ENCODE measurements at regions of chr4 and their contacts with region 1.

Region 1: GRCh38 chr4:15001869-15002658 is at the start of gene CPEB2:
- DNase-seq: peak; percentile 79 to 97
- H3K4me3 ChIP-seq: peak within 1 kb of the TSS; percentile 99
- H3K27ac ChIP-seq: peak within 1 kb of the TSS; percentile 99 to 100
- H3K4me1 ChIP-seq: no peaks in the 10 kb centered on the region
- H3K27me3 ChIP-seq: no peaks in the 10 kb centered on the region
- CTCF ChIP-seq: peak in 1 of 3 experiments; percentile 4
- total RNA-seq, gene CPEB2: 30.4 TPM

Region 2: DNA sequence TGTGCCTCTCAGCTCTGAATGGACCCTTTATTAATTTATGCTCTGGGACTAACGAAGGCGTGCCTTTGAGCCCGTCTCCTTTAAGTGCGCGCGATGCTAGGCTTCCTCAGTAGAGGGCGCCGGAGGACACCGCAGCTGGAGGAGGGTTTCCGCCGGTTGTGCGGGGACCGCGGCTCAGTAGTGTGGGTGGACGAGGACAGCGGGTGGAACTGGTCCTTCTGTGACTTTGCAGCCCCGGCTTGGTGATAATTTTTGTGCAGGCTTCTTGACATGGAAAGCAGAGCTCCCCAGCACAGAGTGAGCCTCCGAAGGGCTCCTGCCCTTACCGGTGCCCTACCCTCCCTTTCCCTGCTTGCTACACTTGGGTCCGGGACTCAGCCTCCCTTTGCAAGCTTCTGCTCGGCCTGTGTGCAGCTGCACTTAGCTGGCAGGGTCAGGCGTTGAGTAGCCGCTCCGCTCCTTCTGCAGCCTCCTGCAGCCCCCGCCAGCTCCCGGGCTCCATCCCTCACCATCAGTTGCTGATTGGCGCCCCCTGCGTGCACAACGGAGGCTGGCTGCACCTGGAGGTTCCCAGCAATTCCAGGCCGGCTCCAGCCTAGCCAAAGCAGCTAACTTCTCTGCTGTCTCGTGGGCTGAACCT is 1347.8 kb before region 1 on chr4:
- intact Hi-C with region 1: loop called (anchors 10 kb)
- DNase-seq: peak in 1 of 2 donors; percentile 89
- H3K4me3 ChIP-seq: peak overlapping the region; percentile 61 to 66
- H3K27ac ChIP-seq: peak overlapping the region in 1 of 2 donors; percentile 22
- H3K4me1 ChIP-seq: peaks cover 0 to 4% of the 10 kb centered on the region in 2 donors
- H3K27me3 ChIP-seq: no peaks in the 10 kb centered on the region
- CTCF ChIP-seq: peak; percentile 58 to 82 (median 74)

Region 3: DNA sequence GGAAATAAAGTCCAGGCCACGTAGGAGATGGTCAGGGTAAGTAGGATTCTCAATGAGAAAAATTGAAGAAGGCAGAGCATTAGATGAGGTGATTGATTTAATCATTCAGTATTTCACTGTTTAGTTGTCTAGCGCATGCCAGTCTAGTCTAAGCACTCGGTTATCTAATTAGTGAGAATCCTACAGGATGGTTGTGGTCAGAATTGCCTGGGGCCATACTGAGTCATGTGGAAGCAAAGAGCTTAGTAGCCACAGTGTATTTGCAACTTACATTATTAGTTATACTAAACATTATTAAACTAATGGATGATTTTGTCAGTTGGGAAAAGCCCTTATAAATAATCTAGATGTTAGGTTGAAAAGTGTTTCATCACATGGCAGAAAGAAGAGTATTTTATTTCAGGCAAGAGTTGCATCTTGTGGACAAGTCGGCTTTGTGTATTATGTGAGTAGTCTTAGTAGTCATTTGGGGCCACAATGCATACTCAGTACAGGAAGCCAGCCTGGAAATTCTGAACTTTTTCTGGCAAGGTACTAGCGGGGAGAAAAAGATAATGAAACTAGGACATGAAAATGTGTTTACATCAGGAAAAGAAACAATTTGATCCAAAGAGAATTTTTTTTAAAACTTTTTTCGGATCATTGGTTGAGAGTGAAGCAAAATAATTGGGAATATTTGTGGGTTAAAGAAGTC is 32.2 kb after region 1 on chr4:
- intact Hi-C with region 1: loop called (anchors 2 kb)
- DNase-seq: no peak
- H3K4me3 ChIP-seq: peak overlapping the region; percentile 0 to 2
- H3K27ac ChIP-seq: peak overlapping the region; percentile 35 to 75
- H3K4me1 ChIP-seq: peaks cover 3 to 54% of the 10 kb centered on the region in 2 donors
- H3K27me3 ChIP-seq: no peaks in the 10 kb centered on the region
- CTCF ChIP-seq: no peak

Region 4: GRCh38 chr4:15162465-15163283 is 160.6 kb after region 1 on chr4:
- intact Hi-C with region 1: loop called (anchors 5 kb)
- DNase-seq: no peak
- H3K4me3 ChIP-seq: no peak overlapping the region
- H3K27ac ChIP-seq: no peak overlapping the region
- H3K4me1 ChIP-seq: no peaks in the 10 kb centered on the region
- H3K27me3 ChIP-seq: no peaks in the 10 kb centered on the region
- CTCF ChIP-seq: peak in 2 of 3 experiments; percentile 11 to 39

Region 5: GRCh38 chr4:15396157-15396800 is 394.2 kb after region 1 on chr4:
- intact Hi-C with region 1: loop called (anchors 5 kb)
- DNase-seq: no peak
- H3K4me3 ChIP-seq: no peak overlapping the region
- H3K27ac ChIP-seq: peak overlapping the region; percentile 44 to 90
- H3K4me1 ChIP-seq: peaks cover 16 to 74% of the 10 kb centered on the region in 2 donors
- H3K27me3 ChIP-seq: no peaks in the 10 kb centered on the region
- CTCF ChIP-seq: peak in 2 of 3 experiments; percentile 49 to 56

Region 6: GRCh38 chr4:15457406-15458201 is 455.5 kb after region 1 on chr4:
- intact Hi-C with region 1: loop called (anchors 5 kb)
- DNase-seq: no peak
- H3K4me3 ChIP-seq: no peak overlapping the region
- H3K27ac ChIP-seq: peak overlapping the region; percentile 61 to 79
- H3K4me1 ChIP-seq: peaks cover 8 to 58% of the 10 kb centered on the region in 2 donors
- H3K27me3 ChIP-seq: no peaks in the 10 kb centered on the region
- CTCF ChIP-seq: peak; percentile 65 to 79 (median 68)